Activated CD4-positive, alpha-beta memory T cell treated with anti-CD3 and anti-CD28 coated beads, Interleukin-2, amount 10 ng/mL, durations not matched to agents 7 days and 5 days (primary cell): ENCODE measurements at regions of chr10 and their contacts with region 1.

Region 1: GRCh38 chr10:60444494-60445064 is 54.9 kb upstream of the ANK3 start:
- DNase-seq: no peak
- H3K4me3 Mint-ChIP-seq: no peak overlapping the region
- H3K27ac Mint-ChIP-seq: no peak overlapping the region
- H3K4me1 Mint-ChIP-seq: peaks cover 12% of the 10 kb centered on the region
- H3K27me3 Mint-ChIP-seq: no peaks in the 10 kb centered on the region

Region 2: DNA sequence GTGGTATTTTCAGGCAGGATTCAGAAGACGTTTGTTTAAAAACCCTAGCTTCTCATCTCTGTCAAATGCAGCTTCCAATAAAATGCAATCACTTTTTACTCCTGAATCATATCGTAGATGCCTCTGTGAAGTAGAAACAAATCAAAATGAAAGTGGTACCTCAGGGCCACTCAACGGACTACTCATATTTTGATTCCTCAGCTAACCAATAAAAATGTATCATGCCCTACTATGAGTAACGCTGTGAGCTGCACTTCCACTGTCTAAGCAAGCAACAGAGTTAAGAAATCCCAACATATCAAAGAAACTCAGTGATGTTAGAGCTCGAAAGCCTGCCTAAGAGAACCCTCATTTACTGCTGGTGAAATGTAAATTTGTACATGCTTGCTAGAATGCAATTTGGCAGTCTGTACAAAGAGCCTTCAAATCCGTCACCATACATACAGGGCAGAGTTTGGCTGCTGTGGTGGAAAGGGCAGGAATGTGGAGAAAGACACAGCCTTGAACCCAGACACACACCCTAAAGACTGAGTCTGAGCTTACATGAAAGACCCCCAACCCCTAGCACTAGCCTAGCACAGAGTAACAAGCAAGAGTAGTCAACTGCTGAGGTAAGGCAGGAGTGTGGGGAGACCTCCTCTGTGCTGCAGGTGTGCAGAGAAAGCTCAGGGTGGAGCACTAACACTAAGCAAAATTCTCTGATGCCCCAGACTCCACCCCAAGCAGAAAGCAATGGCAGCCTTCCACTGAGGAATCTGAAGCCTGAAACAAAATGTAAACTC is 206.4 kb before region 1 on chr10:
- CTCF ChIA-PET with region 1: interaction called, 23 read pairs
- POLR2A ChIA-PET with region 1: no interaction called
- DNase-seq: no peak
- H3K4me3 Mint-ChIP-seq: peak overlapping the region; percentile 51
- H3K27ac Mint-ChIP-seq: peak overlapping the region; percentile 53
- H3K4me1 Mint-ChIP-seq: peaks cover 29% of the 10 kb centered on the region
- H3K27me3 Mint-ChIP-seq: no peaks in the 10 kb centered on the region

Region 3: DNA sequence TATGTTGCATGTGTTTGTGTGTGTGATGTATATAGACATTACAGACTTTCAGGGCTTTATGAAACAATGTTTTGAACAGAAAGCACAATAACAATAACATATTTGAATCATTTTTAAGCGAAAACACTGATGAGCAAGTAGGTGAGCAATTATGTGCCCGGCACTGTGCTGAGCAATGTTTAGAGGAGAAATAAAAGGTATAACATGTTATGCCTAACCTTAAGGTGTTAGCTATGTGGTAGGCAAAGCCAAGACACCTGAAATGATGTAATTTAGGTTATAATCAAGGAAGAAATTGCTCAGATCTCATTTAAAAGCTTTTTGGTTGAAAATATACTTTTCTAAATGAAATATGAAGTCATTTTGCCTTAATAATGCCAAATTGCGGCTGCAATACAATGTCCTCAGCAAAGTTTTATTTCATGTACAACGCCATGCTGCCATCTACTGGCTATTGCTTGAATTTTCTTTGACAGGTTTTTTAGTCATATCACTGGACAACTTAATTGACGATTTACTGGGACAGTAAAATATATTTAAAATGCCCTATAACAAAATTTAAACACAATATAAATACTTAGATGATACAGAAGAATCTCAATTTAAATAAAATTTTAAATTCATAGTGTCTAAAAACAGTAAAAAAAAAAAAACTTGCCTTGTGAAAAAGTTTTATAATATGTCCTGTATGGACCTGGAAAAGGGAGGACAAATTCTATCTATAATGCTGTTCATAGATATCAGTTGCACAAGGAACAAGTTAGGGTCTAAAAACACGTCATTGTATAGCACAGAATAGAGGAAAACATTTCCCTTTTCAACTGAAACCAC is 202.6 kb after region 1 on chr10:
- CTCF ChIA-PET with region 1: interaction called, 42 read pairs
- POLR2A ChIA-PET with region 1: no interaction called
- DNase-seq: peak; percentile 38
- H3K4me3 Mint-ChIP-seq: no peak overlapping the region
- H3K27ac Mint-ChIP-seq: no peak overlapping the region
- H3K4me1 Mint-ChIP-seq: peaks cover 6% of the 10 kb centered on the region
- H3K27me3 Mint-ChIP-seq: no peaks in the 10 kb centered on the region

Region 4: GRCh38 chr10:60769406-60769805 is 324.8 kb after region 1 on chr10:
- CTCF ChIA-PET with region 1: interaction called, 37 read pairs
- POLR2A ChIA-PET with region 1: no interaction called
- DNase-seq: no peak
- H3K4me3 Mint-ChIP-seq: no peak overlapping the region
- H3K27ac Mint-ChIP-seq: no peak overlapping the region
- H3K4me1 Mint-ChIP-seq: peaks cover 10% of the 10 kb centered on the region
- H3K27me3 Mint-ChIP-seq: peaks cover 11% of the 10 kb centered on the region